ENCODE measurements at regions of chr10 and their contacts with region 1.

Region 1: DNA sequence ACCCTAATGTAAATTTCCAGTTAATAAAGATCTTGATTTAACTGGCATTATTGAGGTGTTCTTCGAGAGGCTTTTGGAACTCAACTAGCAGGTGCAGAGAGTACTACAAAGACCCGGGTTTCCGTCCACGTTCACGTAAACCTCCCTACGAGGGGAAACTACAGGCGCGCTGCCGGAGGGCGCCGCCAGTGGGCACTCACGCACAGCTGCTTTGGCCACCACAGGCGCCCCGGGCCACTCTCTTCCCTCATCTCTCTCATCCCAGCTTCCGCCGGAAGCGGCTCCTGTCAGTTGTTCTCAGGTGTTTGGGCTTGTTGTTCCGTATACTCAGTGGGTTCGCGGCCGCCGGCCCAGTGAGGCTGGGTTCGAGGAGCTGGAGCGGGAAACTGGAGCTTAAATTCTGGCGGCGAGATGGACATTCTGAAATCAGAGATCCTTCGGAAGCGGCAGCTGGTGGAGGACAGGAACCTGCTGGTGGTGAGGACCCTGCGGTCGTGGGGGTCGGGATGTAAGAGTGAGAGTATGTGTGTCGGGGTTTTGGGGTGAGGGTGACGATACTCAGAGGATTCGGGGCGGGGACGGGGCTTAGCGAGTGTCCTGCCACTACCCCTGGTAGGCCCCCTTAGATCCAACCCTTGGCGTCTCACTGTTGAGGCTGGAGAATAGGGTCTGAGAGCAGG is at the start of gene PRPF18:
- DNase-seq: peak; percentile 89
- H3K4me3 Mint-ChIP-seq: peak within 1 kb of the TSS; percentile 100
- H3K27ac Mint-ChIP-seq: peak within 1 kb of the TSS; percentile 98
- H3K4me1 Mint-ChIP-seq: peaks cover 16% of the 10 kb centered on the region
- H3K27me3 Mint-ChIP-seq: peaks cover 11% of the 10 kb centered on the region
- total RNA-seq, gene PRPF18: 24.8 and 25.6 TPM in 2 replicates

Region 2: DNA sequence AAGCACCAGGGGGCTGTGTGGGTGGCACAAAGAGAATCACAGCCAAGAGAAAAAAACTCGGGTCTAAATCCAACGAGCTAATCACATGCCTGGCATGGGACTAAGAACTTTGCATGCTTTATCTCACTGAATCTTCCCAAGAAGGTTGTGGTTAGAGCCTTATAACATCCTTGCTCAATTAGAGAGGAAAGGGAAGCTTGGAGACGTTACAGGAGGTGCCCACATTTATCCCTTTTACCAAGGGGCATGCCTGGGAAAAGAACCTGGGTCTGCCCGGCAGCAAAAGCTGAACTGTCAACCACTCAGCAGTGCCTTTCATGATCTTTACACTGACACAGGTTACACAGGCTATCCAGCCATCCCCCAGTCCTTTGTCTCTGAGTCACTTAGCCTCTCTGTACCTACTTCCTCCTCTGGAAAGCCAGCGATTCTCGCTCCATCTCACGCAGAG is 190.1 kb after region 1 on chr10:
- intact Hi-C with region 1: loop called (anchors 1 kb)
- DNase-seq: no peak
- H3K4me3 Mint-ChIP-seq: no peak overlapping the region
- H3K27ac Mint-ChIP-seq: no peak overlapping the region
- H3K4me1 Mint-ChIP-seq: peaks cover 7% of the 10 kb centered on the region
- H3K27me3 Mint-ChIP-seq: peaks cover 17% of the 10 kb centered on the region

Region 3: GRCh38 chr10:13913897-13914296 is 327.1 kb after region 1 on chr10:
- intact Hi-C with region 1: no loop called
- DNase-seq: no peak
- H3K4me3 Mint-ChIP-seq: no peak overlapping the region
- H3K27ac Mint-ChIP-seq: no peak overlapping the region
- H3K4me1 Mint-ChIP-seq: no peaks in the 10 kb centered on the region
- H3K27me3 Mint-ChIP-seq: no peaks in the 10 kb centered on the region

Region 4: GRCh38 chr10:14009371-14010100 is 422.7 kb after region 1 on chr10:
- intact Hi-C with region 1: loop called (anchors 1 kb)
- DNase-seq: peak; percentile 37
- H3K4me3 Mint-ChIP-seq: peak overlapping the region; percentile 81
- H3K27ac Mint-ChIP-seq: peak overlapping the region; percentile 74
- H3K4me1 Mint-ChIP-seq: peaks cover 33% of the 10 kb centered on the region
- H3K27me3 Mint-ChIP-seq: peaks cover 19% of the 10 kb centered on the region